HCT116 (cell line): ENCODE measurements at regions of chr4 and their contacts with region 1.

Region 1: GRCh38 chr4:674172-675035 is at the starts of genes ATP5ME and MYL5:
- DNase-seq: peak; percentile 93
- ATAC-seq: peak; percentile 83
- H3K4me3 ChIP-seq: peak within 1 kb of the TSS; percentile 77 to 91
- H3K27ac ChIP-seq: peak within 1 kb of the TSS; percentile 90
- H3K4me1 ChIP-seq: peaks cover 23 to 54% of the 10 kb centered on the region in 2 experiments
- H3K27me3 ChIP-seq: no peaks in the 10 kb centered on the region
- CTCF ChIP-seq: peak in 2 of 3 experiments; percentile 79 to 93; a peak in 4 of 6 replicates
- POLR2A ChIP-seq: peak; percentile 76
- RAD21 ChIP-seq: no peak
- total RNA-seq, gene ATP5ME: 330 TPM
- total RNA-seq, gene MYL5: 14.0 TPM

Region 2: GRCh38 chr4:473570-474457 is 200.6 kb before region 1 on chr4:
- CTCF ChIA-PET with region 1: no interaction called
- POLR2A ChIA-PET with region 1: no interaction called
- RAD21 ChIA-PET with region 1: no interaction called
- intact Hi-C with region 1: loop called (anchors 10 kb)
- DNase-seq: peak; percentile 99
- ATAC-seq: peak; percentile 98
- H3K4me3 ChIP-seq: peak overlapping the region; percentile 84 to 90
- H3K27ac ChIP-seq: peak overlapping the region; percentile 83
- H3K4me1 ChIP-seq: peaks cover 0 to 12% of the 10 kb centered on the region in 2 experiments; a peak in 1 of 4 replicates
- H3K27me3 ChIP-seq: no peaks in the 10 kb centered on the region
- CTCF ChIP-seq: no peak
- POLR2A ChIP-seq: peak; percentile 87
- RAD21 ChIP-seq: no peak

Region 3: GRCh38 chr4:602559-602942 is 71.9 kb before region 1 on chr4:
- CTCF ChIA-PET with region 1: interaction called, 7 read pairs
- POLR2A ChIA-PET with region 1: interaction called, 3 read pairs
- RAD21 ChIA-PET with region 1: no interaction called
- intact Hi-C with region 1: loop called (anchors 1 kb)
- DNase-seq: peak; percentile 60
- ATAC-seq: peak; percentile 99
- H3K4me3 ChIP-seq: no peak overlapping the region
- H3K27ac ChIP-seq: no peak overlapping the region
- H3K4me1 ChIP-seq: peaks cover 3 to 4% of the 10 kb centered on the region in 2 experiments; a peak in 2 of 4 replicates
- H3K27me3 ChIP-seq: no peaks in the 10 kb centered on the region
- CTCF ChIP-seq: peak; percentile 65 to 90 (median 89)
- POLR2A ChIP-seq: no peak
- RAD21 ChIP-seq: peak; percentile 96